ENCODE measurements at regions of chr2 and their contacts with region 1.

Region 1: DNA sequence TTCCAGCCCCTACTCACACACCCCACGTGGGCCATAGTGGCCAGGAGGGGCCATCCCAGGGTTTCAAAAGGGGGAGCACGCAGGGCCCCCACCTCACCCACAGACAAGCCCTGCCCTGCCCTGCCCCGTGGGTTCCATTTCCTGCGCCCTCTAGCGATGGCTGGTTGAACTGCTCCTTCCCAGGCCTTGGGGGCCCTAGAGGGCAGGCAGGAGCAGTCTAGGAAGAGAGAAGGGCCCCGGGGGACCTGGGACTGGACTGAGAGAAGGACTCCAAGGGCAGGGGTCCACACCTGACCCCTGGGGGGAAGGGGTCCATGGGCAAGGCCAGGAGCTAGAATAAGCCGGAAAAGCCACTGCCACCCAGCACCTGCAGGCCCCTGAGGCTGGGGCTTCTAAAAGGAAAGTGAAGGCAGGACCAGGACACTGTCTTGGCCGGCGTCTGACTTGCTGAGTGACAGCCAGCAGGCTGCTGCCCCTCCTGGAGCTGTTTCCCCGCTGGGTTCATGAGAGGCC is 10.1 kb downstream of the CYP26B1 start:
- DNase-seq: peak; percentile 60 to 69
- H3K4me3 ChIP-seq: no peak overlapping the region
- H3K27ac ChIP-seq: peak overlapping the region; percentile 15 to 93 (median 91)
- H3K4me1 ChIP-seq: peaks cover 47 to 70% of the 10 kb centered on the region in 2 donors
- H3K27me3 ChIP-seq: no peaks in the 10 kb centered on the region
- CTCF ChIP-seq: peak; percentile 73 to 95 (median 84)
- POLR2A ChIP-seq: no peak

Region 2: DNA sequence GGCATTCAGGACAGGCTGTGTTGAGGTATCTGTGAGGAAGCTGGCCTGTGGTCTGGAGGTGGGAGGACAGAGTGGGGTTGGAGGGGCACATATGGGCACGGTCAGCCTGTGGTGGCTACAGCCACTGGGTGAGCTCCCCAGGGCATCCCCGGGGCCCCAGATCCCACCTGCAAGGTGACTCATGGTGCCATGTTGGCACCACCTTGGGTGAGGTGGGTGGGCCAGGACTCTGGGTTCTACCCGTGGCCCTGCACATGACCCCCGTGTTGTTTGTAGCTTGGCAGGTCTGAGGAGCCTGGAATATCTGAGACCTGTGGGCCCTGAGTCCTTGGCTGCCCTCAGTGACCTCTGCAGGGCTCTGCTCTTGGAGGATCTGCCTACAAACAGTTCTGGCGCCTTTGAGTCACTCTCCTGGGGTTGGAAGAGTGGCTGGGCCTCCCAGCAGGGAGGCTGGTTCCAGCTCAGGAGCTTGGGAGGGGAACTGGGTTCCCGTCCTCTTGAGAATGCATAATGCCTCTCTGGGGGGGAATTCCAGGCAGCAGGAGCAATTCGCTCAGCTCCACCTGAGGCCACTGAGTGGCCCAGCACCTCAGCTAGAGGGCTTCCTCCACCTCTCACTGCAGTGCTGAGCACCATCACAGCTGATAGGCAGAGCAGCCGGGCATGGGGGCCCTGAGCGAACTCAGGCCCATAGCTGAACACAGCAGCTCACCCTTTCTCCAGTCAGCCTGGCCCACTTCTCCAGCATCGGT is 579.1 kb before region 1 on chr2:
- intact Hi-C with region 1: loop called (anchors 10 kb)
- DNase-seq: peak; percentile 87 to 90
- H3K4me3 ChIP-seq: no peak overlapping the region
- H3K27ac ChIP-seq: peak overlapping the region in 2 of 3 donors; percentile 51 to 56
- H3K4me1 ChIP-seq: peaks cover 7 to 59% of the 10 kb centered on the region in 2 donors
- H3K27me3 ChIP-seq: no peaks in the 10 kb centered on the region
- CTCF ChIP-seq: no peak
- POLR2A ChIP-seq: no peak

Region 3: DNA sequence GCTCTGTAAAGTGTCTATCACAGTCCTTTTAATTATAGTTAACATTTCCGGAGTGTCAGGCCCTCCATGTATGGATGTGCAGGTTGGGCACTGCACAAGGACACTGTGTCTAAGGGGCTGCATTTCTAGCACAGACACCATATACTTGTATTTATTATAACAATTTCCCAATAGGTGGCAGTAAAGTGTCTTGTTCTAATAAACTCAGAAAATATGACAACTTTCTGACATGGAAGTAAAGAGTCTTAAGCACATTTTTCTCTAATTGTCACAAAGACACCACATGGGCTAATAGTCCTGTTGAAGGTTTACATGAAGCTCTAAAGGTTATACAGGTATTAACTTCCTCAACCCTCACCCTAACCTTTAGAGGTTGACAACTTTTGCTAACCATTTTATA is 527.6 kb before region 1 on chr2:
- intact Hi-C with region 1: loop called (anchors 10 kb)
- DNase-seq: no peak
- H3K4me3 ChIP-seq: no peak overlapping the region
- H3K27ac ChIP-seq: no peak overlapping the region
- H3K4me1 ChIP-seq: peaks cover 0 to 14% of the 10 kb centered on the region in 2 donors
- H3K27me3 ChIP-seq: no peaks in the 10 kb centered on the region
- CTCF ChIP-seq: peak in 5 of 6 experiments; percentile 14 to 46 (median 43)
- POLR2A ChIP-seq: no peak

Region 4: GRCh38 chr2:71833855-71834560 is 303.5 kb before region 1 on chr2:
- intact Hi-C with region 1: no loop called
- DNase-seq: peak; percentile 3 to 12
- H3K4me3 ChIP-seq: no peak overlapping the region
- H3K27ac ChIP-seq: no peak overlapping the region
- H3K4me1 ChIP-seq: peaks cover 0 to 12% of the 10 kb centered on the region in 2 donors
- H3K27me3 ChIP-seq: no peaks in the 10 kb centered on the region
- CTCF ChIP-seq: no peak
- POLR2A ChIP-seq: no peak

Region 5: GRCh38 chr2:71856773-71857525 is 280.6 kb before region 1 on chr2:
- intact Hi-C with region 1: no loop called
- DNase-seq: peak in 1 of 2 donors; percentile 13
- H3K4me3 ChIP-seq: no peak overlapping the region
- H3K27ac ChIP-seq: no peak overlapping the region
- H3K4me1 ChIP-seq: no peaks in the 10 kb centered on the region
- H3K27me3 ChIP-seq: no peaks in the 10 kb centered on the region
- CTCF ChIP-seq: no peak
- POLR2A ChIP-seq: no peak

Measured in thyroid gland (tissue), 4 donors.